ENCODE measurements at regions of chr12 and their contacts with region 1.

Region 1: DNA sequence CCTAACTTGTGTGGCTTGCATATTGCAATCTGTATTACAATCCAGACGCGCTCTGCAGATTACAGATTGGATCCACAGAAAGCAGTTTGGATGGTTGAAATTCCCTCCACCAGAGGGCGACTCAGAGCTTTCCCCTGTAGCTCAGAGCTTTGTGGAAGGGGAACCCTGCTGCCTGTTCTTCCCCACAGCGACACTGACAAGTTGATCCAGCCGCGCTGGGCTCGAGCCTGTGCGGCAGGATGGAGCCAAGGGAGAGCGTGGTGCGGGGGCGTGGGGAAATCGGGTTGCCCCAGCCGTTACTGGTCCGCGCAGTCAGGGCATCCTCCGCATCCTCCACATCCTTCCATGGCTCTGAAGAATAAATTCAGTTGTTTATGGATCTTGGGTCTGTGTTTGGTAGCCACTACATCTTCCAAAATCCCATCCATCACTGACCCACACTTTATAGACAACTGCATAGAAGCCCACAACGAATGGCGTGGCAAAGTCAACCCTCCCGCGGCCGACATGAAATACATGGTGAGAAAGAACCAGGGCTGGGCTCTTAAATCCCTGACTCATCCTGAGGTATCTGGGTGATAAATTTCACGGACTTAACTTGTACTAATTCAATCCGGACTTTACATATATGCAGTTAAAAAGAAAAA is at the start of gene GLIPR1L1:
- DNase-seq: peak; percentile 92 to 97 (median 96)
- H3K4me3 ChIP-seq: peak within 1 kb of the TSS; percentile 15 to 87 (median 65)
- H3K27ac ChIP-seq: no peak within 1 kb of the TSS
- H3K4me1 ChIP-seq: peaks cover 3 to 20% (median 11%) of the 10 kb centered on the region in 4 experiments
- H3K27me3 ChIP-seq: peaks cover 0 to 3% (median 0%) of the 10 kb centered on the region in 5 experiments

Region 2: GRCh38 chr12:75505706-75506312 is 171.3 kb after region 1 on chr12:
- CTCF ChIA-PET with region 1: interaction called, 52 read pairs
- POLR2A ChIA-PET with region 1: no interaction called
- DNase-seq: peak; percentile 54 to 77 (median 73)
- H3K4me3 ChIP-seq: no peak overlapping the region
- H3K27ac ChIP-seq: no peak overlapping the region
- H3K4me1 ChIP-seq: peaks cover 10 to 18% (median 11%) of the 10 kb centered on the region in 4 experiments
- H3K27me3 ChIP-seq: no peaks in the 10 kb centered on the region

Measured in common myeloid progenitor, CD34-positive (primary cell).